Activated CD4-positive, alpha-beta memory T cell treated with anti-CD3 and anti-CD28 coated beads for 36 hours (primary cell): ENCODE measurements at regions of chr15 and their contacts with region 1.

Region 1: DNA sequence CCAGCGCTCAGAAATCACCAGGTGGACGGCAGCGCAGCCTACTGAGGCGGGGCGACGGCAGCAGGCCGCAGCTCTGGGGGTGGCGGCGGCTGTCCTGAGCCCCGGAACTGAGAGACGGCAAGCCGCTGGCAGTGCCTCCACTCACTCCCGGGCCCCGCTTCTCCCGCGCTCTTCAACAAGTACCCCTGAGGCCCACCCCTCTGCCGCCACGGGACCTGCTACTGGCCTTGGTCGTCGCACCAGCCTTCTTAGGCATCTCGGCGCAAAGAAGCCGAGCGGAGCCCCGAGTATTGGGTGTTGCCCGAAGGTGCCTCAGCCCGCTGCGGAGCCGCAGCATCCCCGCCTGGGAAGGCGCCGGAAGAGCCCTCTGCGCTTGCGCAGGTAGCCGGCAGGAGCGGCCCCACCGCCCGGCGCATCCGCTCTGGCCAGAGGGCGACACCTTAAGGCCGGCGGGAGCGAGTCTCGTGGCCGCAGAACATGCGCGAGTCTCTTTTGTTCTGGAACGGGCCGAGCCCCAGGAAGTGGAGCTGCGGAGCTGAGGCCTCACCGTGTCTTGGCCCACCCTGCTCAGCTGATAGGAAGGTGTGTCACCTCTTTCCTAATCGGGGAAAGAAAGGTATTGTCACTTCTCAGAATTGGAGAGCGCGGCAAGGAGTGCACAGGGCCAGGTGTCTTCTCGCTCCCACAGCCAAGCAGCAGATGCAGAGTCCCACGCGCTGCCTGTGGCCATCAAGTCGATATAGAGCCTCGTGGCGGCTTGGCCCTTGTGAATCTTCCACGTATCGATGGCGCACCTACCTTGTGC is at the start of gene C15orf40:
- DNase-seq: peak; percentile 90
- H3K4me3 Mint-ChIP-seq: peak within 1 kb of the TSS; percentile 90
- H3K27ac Mint-ChIP-seq: peak within 1 kb of the TSS; percentile 89
- H3K4me1 Mint-ChIP-seq: peaks cover 44% of the 10 kb centered on the region
- H3K27me3 Mint-ChIP-seq: no peaks in the 10 kb centered on the region
- total RNA-seq, gene C15orf40: 21.8 to 26.3 TPM

Region 2: GRCh38 chr15:82680200-82681102 is 331.0 kb before region 1 on chr15:
- CTCF ChIA-PET with region 1: no interaction called
- POLR2A ChIA-PET with region 1: no interaction called
- intact Hi-C with region 1: loop called (anchors 1 kb)
- DNase-seq: peak; percentile 86
- H3K4me3 Mint-ChIP-seq: peak overlapping the region; percentile 85
- H3K27ac Mint-ChIP-seq: peak overlapping the region; percentile 29
- H3K4me1 Mint-ChIP-seq: peaks cover 7% of the 10 kb centered on the region
- H3K27me3 Mint-ChIP-seq: no peaks in the 10 kb centered on the region

Region 3: GRCh38 chr15:82936960-82937711 is 74.3 kb before region 1 on chr15:
- CTCF ChIA-PET with region 1: no interaction called
- POLR2A ChIA-PET with region 1: no interaction called
- intact Hi-C with region 1: no loop called
- DNase-seq: no peak
- H3K4me3 Mint-ChIP-seq: no peak overlapping the region
- H3K27ac Mint-ChIP-seq: no peak overlapping the region
- H3K4me1 Mint-ChIP-seq: peaks cover 8% of the 10 kb centered on the region
- H3K27me3 Mint-ChIP-seq: peaks cover 8% of the 10 kb centered on the region

Region 4: GRCh38 chr15:82966671-82967071 is 44.8 kb before region 1 on chr15:
- CTCF ChIA-PET with region 1: no interaction called
- POLR2A ChIA-PET with region 1: no interaction called
- intact Hi-C with region 1: no loop called
- DNase-seq: peak; percentile 61
- H3K4me3 Mint-ChIP-seq: no peak overlapping the region
- H3K27ac Mint-ChIP-seq: no peak overlapping the region
- H3K4me1 Mint-ChIP-seq: peaks cover 5% of the 10 kb centered on the region
- H3K27me3 Mint-ChIP-seq: no peaks in the 10 kb centered on the region

Region 5: DNA sequence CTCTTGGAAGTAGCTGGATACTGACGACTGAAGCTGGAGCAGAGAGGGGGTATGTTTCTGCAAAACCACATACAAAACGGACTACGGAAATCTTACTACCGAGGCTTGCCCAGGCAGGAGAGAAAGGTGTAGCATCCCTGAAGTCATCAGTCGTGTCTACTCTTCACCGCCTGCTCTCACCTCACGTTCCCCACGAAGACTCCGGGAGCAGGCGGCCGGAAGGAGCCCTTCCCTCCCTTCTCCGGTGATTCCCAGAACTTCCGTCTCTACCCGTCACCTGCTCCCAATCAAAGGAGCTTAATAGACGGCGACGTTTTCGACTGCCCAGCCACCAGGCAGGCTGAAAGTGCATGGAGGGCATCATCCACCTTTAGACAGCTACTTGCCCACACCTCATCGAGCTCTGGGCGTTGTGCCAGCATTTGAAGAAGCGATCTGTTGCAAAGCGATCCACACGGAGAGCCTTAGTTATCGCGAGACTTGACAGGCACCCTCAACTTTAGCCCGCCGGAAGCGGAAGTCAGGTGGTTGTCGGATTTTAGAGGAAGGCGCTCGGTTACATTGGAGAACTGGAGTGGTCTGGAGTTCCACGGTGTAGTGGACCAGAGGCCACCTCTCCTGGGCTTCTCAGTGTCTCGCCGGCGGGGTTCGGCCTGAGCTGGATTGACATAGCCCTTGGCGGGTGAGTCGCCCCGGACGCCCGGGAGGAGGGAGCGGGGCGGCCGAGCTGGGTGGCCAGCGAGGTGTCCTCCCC is 25.6 kb before region 1 on chr15 and contains the start of gene RAMAC:
- CTCF ChIA-PET with region 1: interaction called, 18 read pairs
- POLR2A ChIA-PET with region 1: interaction called, 3 read pairs
- intact Hi-C with region 1: loop called (anchors 1 kb)
- DNase-seq: peak; percentile 95
- H3K4me3 Mint-ChIP-seq: peak within 1 kb of the TSS; percentile 98
- H3K27ac Mint-ChIP-seq: peak within 1 kb of the TSS; percentile 96
- H3K4me1 Mint-ChIP-seq: peaks cover 18% of the 10 kb centered on the region
- H3K27me3 Mint-ChIP-seq: no peaks in the 10 kb centered on the region
- total RNA-seq, gene RAMAC: 19.0 to 20.2 TPM

Region 6: DNA sequence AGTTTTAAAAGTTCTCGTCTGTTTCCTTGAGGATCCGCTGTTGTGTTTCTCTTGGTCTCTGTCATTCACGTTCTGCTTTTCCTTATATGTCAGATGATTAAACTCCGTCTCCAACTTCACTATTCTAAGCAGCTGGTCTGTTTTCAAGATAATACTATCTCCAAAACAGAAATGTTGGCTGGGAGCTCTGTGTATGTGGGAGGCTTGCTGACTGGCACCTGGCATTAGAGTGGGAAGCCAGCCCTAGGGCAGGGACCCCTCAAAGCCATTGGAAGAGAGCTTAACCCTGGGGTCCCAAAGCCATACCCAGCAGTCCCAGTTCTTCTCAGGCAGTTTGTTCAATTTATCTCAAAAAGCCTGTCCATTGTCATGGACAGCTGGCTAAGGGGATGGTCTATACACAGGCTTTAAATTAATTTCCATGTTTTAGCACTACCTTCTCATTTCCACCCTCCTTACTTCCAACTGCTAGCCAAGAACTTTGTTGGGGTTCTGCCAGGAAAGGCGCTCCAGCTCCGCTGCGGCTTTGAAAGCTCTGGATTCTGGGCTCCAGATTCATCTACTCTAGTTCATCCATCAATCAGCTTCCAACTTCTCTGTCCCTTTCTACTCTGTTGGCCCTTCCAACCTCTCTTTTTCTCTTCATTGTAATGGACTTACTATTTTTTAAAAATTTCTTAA is 46.4 kb after region 1 on chr15:
- CTCF ChIA-PET with region 1: interaction called, 12 read pairs
- POLR2A ChIA-PET with region 1: interaction called, 3 read pairs
- intact Hi-C with region 1: no loop called
- DNase-seq: no peak
- H3K4me3 Mint-ChIP-seq: no peak overlapping the region
- H3K27ac Mint-ChIP-seq: no peak overlapping the region
- H3K4me1 Mint-ChIP-seq: peaks cover 23% of the 10 kb centered on the region
- H3K27me3 Mint-ChIP-seq: no peaks in the 10 kb centered on the region

Region 7: GRCh38 chr15:83108266-83109226 is 97.1 kb after region 1 on chr15:
- CTCF ChIA-PET with region 1: no interaction called
- POLR2A ChIA-PET with region 1: no interaction called
- intact Hi-C with region 1: loop called (anchors 2 kb)
- DNase-seq: peak; percentile 31
- H3K4me3 Mint-ChIP-seq: peak overlapping the region; percentile 73
- H3K27ac Mint-ChIP-seq: no peak overlapping the region
- H3K4me1 Mint-ChIP-seq: peaks cover 11% of the 10 kb centered on the region
- H3K27me3 Mint-ChIP-seq: peaks cover 49% of the 10 kb centered on the region

Region 8: DNA sequence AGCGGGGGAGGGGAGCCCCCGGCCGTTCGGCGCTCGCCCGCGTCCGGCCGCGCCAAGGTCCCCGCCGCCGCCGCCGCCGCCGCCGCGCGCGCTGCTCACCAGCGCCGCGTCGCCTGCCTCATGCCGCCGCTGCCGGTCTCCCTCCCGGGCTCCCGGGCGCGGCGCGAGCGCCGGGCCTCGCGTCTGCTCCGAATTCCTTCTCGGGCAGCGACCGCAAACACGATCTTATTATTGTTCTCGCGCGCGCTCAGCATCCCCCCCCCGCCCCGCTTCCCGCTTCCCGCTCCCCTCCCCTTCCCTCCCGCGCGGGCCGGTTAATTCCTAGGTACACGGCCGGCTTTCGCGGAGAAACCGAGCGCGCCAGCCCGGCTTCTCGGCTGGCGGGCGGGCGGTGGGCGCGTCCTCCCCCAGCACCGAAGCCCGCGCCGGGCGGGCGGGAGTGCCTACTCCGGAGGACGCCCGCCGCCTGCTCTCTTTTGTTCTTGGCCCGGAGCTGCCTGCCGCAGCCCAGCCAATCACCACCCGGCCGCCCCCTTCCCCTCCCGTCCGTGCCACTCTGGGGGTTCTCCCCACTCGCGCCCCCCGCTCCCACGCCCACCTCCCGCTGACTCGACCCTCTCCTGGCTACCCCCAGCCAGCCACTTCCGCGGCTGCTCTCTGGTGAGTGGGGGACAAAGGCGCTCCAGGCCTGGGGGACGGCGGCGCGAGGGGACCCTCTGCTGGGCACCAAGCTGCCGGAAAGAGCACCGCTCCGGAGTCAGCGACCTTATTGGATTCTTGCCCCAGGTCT is 196.3 kb after region 1 on chr15 and contains the start of gene HDGFL3:
- CTCF ChIA-PET with region 1: no interaction called
- POLR2A ChIA-PET with region 1: no interaction called
- intact Hi-C with region 1: loop called (anchors 1 kb)
- DNase-seq: peak; percentile 28
- H3K4me3 Mint-ChIP-seq: peak within 1 kb of the TSS; percentile 77
- H3K27ac Mint-ChIP-seq: no peak within 1 kb of the TSS
- H3K4me1 Mint-ChIP-seq: peaks cover 4% of the 10 kb centered on the region
- H3K27me3 Mint-ChIP-seq: peaks cover 18% of the 10 kb centered on the region
- total RNA-seq, gene HDGFL3: 7.1 to 8.0 TPM